ENCODE measurements at regions of chr3 and their contacts with region 1.

Region 1: GRCh38 chr3:31695280-31696008 is 162.7 kb downstream of the STT3B start:
- DNase-seq: peak; percentile 68
- H3K4me3 Mint-ChIP-seq: no peak overlapping the region
- H3K27ac Mint-ChIP-seq: no peak overlapping the region
- H3K4me1 Mint-ChIP-seq: no peaks in the 10 kb centered on the region
- H3K27me3 Mint-ChIP-seq: no peaks in the 10 kb centered on the region

Region 2: DNA sequence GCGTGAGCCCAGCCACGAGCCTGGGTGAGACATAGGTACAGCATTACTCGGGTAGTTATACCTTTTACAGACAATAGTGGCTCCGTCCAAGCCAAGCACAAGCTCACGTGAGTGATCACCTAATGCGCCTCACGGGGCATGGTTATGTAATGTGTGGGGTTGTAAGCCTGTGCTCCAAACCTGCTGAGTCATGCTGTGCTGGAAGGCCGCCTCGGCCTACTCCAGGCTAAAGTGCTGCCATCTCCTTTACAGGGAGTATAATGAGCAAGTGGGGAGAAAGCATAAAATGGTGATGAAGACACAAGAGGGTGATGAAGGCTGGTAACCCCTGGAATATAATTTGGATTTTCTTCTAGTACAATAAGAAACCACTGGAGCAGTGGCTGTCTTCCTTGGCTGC is 338.5 kb before region 1 on chr3:
- CTCF ChIA-PET with region 1: no interaction called
- intact Hi-C with region 1: loop called (anchors 10 kb)
- DNase-seq: peak; percentile 12
- H3K4me3 Mint-ChIP-seq: no peak overlapping the region
- H3K27ac Mint-ChIP-seq: peak overlapping the region; percentile 3
- H3K4me1 Mint-ChIP-seq: peaks cover 18% of the 10 kb centered on the region
- H3K27me3 Mint-ChIP-seq: no peaks in the 10 kb centered on the region

Region 3: GRCh38 chr3:31550452-31551251 is 144.8 kb before region 1 on chr3:
- CTCF ChIA-PET with region 1: interaction called, 5 read pairs
- intact Hi-C with region 1: loop called (anchors 1 kb)
- DNase-seq: peak; percentile 32
- H3K4me3 Mint-ChIP-seq: no peak overlapping the region
- H3K27ac Mint-ChIP-seq: peak overlapping the region; percentile 48
- H3K4me1 Mint-ChIP-seq: peaks cover 77% of the 10 kb centered on the region
- H3K27me3 Mint-ChIP-seq: no peaks in the 10 kb centered on the region

Region 4: DNA sequence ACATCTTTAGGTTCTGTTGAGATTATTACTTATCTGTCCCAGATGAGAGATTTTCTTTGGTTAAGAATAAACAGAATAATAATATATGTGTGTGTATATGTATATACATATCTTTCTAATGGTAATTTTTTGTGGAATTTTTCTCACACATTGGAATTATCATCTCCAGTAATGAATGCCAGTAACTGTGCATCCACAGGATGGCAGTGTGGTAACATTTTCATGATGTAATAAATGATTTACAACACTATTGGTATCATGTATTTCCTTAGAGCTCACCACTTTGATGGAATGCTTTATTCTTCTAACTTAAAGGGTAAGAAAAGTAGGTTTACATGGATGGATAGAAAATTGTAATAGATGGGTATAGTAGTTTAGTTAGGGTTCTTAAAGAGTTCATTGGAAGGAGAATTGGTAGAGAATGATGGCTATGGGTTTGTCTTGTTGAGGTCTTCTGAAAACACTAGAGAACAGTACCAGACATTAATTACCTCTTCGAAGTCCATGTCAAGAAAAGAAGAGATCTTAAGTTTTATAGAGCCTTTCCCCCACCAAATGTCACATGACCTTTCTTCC is 84.7 kb before region 1 on chr3:
- CTCF ChIA-PET with region 1: no interaction called
- intact Hi-C with region 1: loop called (anchors 1 kb)
- DNase-seq: peak; percentile 31
- H3K4me3 Mint-ChIP-seq: no peak overlapping the region
- H3K27ac Mint-ChIP-seq: no peak overlapping the region
- H3K4me1 Mint-ChIP-seq: peaks cover 60% of the 10 kb centered on the region
- H3K27me3 Mint-ChIP-seq: no peaks in the 10 kb centered on the region